ENCODE measurements at regions of chr3 and their contacts with region 1.

Region 1: GRCh38 chr3:36700537-36701248 is 63.7 kb downstream of the DCLK3 start:
- DNase-seq: peak; percentile 57
- ATAC-seq: peak; percentile 77

Region 2: DNA sequence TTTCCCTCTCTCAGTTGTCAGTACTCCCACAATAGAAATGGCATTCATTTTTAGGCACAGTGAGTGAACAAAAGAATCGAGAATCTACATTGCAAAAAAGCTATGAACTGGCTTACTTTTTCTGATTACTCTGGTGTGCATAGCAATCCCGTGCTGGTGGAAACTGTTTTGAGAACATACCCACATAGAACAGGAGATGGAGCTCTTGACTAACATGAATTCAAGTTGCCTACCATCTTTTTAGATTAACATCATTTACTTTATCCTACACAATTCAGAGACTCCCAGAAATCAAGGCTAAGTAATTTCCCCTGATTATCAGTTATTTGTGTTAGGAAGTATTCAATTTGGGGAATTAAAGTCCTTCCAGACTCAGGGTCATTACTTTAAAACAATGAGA is 734.8 kb before region 1 on chr3:
- intact Hi-C with region 1: loop called (anchors 5 kb)
- DNase-seq: no peak
- ATAC-seq: no peak

Region 3: DNA sequence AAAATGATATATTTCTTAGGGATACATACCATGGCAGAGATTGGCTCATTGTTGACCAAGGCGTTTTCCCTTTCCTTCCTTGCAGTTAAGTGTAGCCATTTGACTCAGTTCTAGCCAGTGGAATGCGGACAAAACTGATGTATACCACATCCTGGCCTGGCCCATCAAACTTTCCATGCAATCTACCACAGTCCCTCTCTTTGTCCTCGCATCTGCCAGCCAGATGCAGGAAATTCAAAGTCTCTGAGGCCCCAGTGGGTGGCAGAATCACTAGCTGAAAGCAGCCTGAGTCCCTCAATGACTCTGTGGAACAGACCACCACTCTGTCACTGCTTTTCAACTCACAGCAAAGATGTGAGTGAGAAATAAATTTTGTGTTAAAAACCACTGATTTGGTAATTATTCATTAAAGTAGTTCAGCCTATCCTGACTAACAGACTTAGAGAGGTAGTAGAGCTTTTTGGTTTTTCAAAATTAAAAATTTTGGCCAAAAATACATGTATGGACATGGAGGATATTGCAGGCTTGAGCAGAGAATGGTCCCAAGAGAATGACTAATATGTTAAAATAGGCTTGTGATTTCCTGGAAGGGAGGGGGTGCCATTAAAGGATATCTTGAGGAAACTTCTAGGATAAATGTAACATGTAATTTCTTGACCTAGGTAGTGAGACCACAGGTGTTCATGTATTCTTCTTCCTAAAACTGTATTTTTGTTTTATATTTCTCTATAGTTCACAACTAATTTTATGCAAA is 462.7 kb after region 1 on chr3:
- intact Hi-C with region 1: no loop called
- DNase-seq: no peak
- ATAC-seq: peak; percentile 17

Measured in Right ventricle myocardium superior (tissue), 1 donor.